ENCODE measurements at regions of chr10 and their contacts with region 1.

Region 1: GRCh38 chr10:98467506-98468346 is 21.0 kb upstream of the HPS1 start:
- DNase-seq: no peak
- H3K4me3 ChIP-seq: peak overlapping the region; percentile 42
- H3K27me3 ChIP-seq: no peaks in the 10 kb centered on the region
- CTCF ChIP-seq: peak; percentile 86

Region 2: GRCh38 chr10:98478430-98479222 is 10.9 kb after region 1 on chr10:
- CTCF ChIA-PET with region 1: interaction called, 19 read pairs
- POLR2A ChIA-PET with region 1: no interaction called
- DNase-seq: no peak
- H3K4me3 ChIP-seq: no peak overlapping the region
- H3K27me3 ChIP-seq: no peaks in the 10 kb centered on the region
- CTCF ChIP-seq: no peak

Region 3: DNA sequence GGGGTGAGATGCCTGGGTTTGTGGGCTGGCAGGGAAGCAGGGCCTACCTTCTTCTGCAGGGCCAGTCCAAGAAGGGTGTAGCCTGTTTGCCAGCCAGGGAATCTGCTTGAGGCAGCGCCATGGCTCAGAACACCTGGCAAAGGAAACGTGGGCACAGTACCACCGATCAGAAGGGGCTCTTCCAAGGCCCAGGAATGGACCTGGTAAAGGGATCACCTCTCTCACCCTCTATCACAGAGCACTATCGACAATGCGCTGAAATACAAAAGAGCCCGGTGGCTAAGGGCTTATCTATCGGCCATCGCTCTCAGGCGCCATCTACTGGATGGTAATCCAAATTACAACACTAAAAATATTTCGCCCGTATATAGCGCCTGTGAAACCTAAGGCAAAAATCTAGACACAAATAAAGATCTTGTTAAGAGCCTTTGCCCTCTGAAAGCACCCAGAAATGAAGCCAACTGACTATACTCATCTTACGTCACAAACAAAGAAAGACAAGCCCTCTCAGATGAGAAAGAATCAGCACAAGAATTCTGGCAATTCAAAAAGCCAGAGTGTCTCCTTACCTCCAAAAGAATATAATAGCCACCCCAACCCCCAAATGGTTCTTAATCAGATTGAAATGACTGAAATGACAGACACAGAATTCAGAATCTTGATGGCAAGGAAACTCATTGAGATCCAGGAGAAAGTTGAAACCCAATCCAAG is 196.8 kb after region 1 on chr10:
- CTCF ChIA-PET with region 1: interaction called, 14 read pairs
- POLR2A ChIA-PET with region 1: no interaction called
- DNase-seq: no peak
- H3K4me3 ChIP-seq: no peak overlapping the region
- H3K27me3 ChIP-seq: no peaks in the 10 kb centered on the region
- CTCF ChIP-seq: peak; percentile 57

Region 4: GRCh38 chr10:99042051-99042771 is 574.5 kb after region 1 on chr10:
- CTCF ChIA-PET with region 1: interaction called, 10 read pairs
- POLR2A ChIA-PET with region 1: no interaction called
- DNase-seq: no peak
- H3K4me3 ChIP-seq: no peak overlapping the region
- H3K27me3 ChIP-seq: no peaks in the 10 kb centered on the region
- CTCF ChIP-seq: no peak

Region 5: GRCh38 chr10:99172130-99172738 is 704.5 kb after region 1 on chr10:
- CTCF ChIA-PET with region 1: interaction called, 10 read pairs
- POLR2A ChIA-PET with region 1: no interaction called
- DNase-seq: peak; percentile 3
- H3K4me3 ChIP-seq: no peak overlapping the region
- H3K27me3 ChIP-seq: no peaks in the 10 kb centered on the region
- CTCF ChIP-seq: peak; percentile 79

Region 6: DNA sequence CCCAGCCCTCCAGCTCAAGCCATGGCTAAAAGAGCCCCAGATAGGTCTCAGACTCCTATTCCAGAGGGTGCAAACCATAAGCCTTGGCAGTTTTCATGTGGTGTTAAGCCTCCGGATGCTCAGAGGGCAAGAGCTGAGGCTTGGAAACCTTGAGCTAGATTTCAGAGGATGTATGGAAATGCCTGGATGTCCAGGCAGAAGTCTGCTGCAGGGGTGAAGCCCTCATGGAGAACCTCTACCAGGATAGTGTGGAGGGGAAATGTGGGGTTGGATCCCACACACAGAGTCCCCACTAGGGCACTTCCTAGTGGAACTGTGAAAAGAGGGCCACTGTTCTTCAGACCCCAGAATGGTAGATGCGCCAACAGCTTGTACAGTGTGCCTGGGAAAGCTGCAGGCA is 781.1 kb after region 1 on chr10:
- CTCF ChIA-PET with region 1: interaction called, 15 read pairs
- POLR2A ChIA-PET with region 1: no interaction called
- DNase-seq: no peak
- H3K4me3 ChIP-seq: no peak overlapping the region
- H3K27me3 ChIP-seq: no peaks in the 10 kb centered on the region
- CTCF ChIP-seq: no peak